ENCODE measurements at regions of chr1 and their contacts with region 1.

Region 1: DNA sequence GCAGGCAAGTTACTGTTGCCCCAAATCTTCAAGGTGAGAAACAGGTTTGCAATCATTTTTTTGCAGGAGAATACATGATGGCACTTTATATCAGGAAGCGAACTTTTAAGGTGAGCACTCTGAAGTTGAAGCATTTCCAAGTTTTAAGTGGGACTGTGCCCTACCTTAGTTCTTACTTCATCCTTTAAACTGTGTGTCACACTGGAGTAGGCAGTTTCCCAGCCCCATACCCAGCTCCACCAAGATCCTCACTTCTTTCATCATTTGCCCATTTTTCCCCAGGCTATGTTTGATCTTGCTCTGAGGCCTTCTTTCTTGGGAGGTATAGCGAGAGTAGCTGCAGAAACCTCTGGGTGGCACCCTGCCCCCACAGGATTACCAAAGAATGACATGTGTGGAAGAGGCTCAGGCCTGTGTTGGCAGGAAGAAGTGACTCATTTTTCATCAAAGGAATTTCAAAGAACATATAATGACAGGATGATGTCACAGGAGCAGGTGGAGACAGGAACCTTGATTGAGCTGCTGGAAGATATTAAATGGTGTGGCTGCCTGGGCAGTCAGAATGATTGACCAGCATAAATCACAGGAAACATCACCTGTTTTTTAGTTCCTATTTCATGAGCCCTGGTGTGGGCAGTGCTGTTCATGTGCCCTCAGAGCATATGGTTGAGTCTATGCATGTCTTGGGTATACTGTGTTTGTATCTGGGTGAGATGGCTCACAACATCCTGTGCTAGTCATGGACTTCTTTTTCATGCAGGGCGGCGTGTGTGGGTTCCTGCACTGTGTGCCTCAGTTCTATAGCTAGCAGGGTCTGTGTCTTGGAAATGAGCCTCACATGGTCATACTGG is 20.8 kb upstream of the MACF1 start:
- DNase-seq: no peak
- CTCF ChIP-seq: peak; percentile 29

Region 2: DNA sequence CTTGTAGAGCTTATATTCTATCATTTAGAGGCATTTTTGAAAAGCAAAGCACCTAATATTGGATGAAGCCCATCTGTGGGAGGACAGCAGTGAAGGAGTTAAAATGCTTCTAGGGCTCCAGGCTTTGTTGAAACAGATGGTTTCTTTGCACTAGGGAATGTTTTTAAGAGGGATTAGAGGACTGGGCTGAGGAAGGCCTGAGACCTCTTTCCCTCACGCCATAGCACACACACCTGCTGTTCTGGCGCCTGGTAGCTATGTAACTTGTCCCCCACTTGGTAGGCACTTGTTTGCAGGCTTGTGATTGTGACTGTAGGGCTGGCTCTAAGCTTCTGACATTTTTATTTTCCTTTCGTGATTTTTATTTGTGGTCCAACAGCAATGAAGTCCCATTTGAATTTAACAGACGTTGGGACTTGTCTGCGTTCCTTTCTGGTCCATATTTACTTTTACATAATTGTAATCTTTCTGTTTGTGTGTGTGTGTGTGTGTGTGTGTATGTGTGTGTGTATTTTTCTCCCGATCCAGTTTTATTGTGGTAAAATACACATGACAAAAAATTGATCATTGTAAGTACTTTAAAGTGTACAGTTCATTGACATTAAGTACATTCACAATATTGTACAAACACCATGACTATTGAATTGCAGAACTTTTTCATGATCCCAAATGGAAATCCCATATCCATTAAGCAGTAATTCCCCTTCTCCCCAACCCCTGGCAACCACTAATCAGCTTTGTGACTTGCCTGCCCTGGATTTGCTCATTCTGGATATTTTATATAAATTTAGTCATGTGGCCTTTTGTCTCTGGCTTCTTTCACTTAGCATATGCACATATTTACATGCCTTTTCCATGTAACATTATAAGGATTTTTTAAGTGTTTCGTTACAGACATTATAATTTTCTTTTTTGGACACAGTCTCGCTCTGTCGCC is 12.7 kb before region 1 on chr1:
- CTCF ChIA-PET with region 1: interaction called, 15 read pairs
- POLR2A ChIA-PET with region 1: no interaction called
- DNase-seq: no peak
- CTCF ChIP-seq: no peak

Measured in GM10248 (cell line).